PC-3 (cell line): ENCODE measurements at regions of chr6 and their contacts with region 1.

Region 1: GRCh38 chr6:27188885-27189418 is 58.5 kb upstream of the PRSS16 start:
- DNase-seq: peak; percentile 91
- ATAC-seq: peak; percentile 80
- H3K4me3 ChIP-seq: peak overlapping the region; percentile 81
- H3K27ac ChIP-seq: peak overlapping the region; percentile 41
- H3K4me1 ChIP-seq: no peaks in the 10 kb centered on the region
- H3K27me3 ChIP-seq: no peaks in the 10 kb centered on the region
- CTCF ChIP-seq: peak; percentile 81

Region 2: GRCh38 chr6:27157459-27158315 is 31.3 kb before region 1 on chr6:
- CTCF ChIA-PET with region 1: no interaction called
- POLR2A ChIA-PET with region 1: no interaction called
- intact Hi-C with region 1: loop called (anchors 2 kb)
- DNase-seq: peak; percentile 87
- ATAC-seq: peak; percentile 75
- H3K4me3 ChIP-seq: peak overlapping the region; percentile 81
- H3K27ac ChIP-seq: no peak overlapping the region
- H3K4me1 ChIP-seq: peaks cover 10% of the 10 kb centered on the region
- H3K27me3 ChIP-seq: no peaks in the 10 kb centered on the region
- CTCF ChIP-seq: peak; percentile 47; the same call in 1 of the 2 replicates

Region 3: DNA sequence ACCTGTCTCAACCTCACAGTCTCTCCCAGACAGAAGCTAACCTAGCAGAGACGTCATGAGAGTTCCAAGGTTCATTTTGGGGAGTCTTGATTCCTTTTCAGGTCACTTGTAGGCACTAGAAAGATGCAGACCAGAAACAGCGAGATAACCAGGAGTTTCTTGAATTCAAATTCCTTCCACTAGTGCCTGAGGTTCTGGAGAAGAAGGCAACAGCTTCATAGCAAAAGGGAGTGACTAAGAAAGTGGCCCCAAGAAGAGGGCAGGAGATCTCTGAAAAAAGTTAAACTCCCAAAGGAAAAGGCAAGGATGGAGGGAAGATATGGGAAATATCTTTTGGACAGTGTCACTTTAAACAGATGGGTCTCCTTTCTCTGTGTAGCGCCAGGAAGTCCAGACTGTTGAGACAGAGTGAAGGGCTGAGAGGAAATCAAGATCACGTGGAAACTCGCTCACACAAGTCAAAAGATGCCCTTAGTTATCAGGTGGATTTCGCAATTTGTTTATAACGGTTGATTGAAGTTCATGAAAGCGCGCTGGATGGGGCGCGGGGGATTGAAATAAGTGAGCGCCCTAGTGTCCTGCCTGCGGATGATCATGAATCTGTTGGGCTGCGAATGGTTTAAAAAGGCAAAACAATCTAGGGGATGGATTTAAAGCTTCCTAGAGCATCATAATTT is 53.8 kb after region 1 on chr6:
- CTCF ChIA-PET with region 1: no interaction called
- POLR2A ChIA-PET with region 1: no interaction called
- intact Hi-C with region 1: no loop called
- DNase-seq: no peak
- ATAC-seq: no peak
- H3K4me3 ChIP-seq: no peak overlapping the region
- H3K27ac ChIP-seq: no peak overlapping the region
- H3K4me1 ChIP-seq: peaks cover 6% of the 10 kb centered on the region; the same call in 1 of the 2 replicates
- H3K27me3 ChIP-seq: peaks cover 7% of the 10 kb centered on the region; the same call in 1 of the 2 replicates
- CTCF ChIP-seq: no peak

Region 4: DNA sequence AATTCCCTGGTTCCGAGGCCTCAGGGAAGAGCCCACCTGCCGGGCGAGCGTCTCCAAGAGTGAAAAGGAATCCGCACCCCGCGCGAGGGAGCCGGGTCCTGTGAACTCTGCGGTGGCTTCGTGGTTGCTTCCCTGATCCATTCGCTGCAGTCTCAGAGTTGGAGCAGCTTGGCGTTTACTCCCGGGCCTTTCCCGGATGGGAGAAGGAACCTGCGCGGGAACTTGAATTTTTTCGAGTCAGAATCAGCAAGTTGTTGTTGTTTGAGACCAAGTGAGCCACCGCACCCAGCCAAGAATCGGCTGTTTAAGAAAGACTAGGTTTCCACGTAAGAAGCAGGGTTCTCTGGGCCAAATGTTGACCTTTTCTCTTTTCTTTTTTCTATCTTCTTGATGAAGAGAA is 71.4 kb after region 1 on chr6:
- CTCF ChIA-PET with region 1: no interaction called
- POLR2A ChIA-PET with region 1: no interaction called
- intact Hi-C with region 1: no loop called
- DNase-seq: no peak
- ATAC-seq: no peak
- H3K4me3 ChIP-seq: no peak overlapping the region
- H3K27ac ChIP-seq: no peak overlapping the region
- H3K4me1 ChIP-seq: no peaks in the 10 kb centered on the region
- H3K27me3 ChIP-seq: no peaks in the 10 kb centered on the region
- CTCF ChIP-seq: no peak

Region 5: DNA sequence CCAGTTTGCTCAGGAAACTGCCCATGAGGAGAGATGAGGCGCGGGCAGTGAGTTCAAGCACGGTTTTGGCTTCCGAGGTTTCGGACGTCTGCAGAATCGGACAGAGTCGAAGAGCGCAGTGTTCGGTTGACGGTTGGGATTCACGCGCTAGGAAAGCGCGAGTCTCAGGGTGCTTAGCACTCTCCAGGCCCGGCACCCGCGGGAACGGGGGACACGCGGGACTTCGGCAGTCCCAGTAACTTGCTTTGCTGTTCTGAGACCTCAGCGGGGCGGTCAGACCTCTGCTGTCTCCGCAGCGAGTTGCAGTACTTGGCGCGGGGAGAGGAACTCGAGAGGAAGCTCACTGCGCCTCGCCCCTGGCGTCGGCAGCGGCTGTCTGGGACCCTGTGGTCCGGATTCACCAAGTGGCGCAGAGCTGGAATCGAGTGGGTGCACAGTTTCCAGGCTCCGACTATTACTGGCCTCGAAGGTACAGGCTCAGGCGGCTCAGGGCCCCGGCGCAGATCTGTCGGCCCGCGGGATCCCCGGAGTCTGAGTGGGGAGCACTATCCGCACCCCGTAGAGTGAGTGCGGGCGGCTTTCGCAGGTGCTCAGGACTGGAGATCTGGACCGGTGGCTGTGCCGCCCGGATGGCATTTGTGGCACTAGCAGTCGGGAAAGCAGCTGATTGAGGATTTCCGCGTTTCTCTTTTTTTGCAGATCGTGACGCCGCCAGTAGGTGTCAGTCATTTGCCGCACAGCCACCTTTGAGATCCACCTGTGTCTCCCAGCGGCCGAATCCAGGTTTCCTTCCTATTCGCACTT is 123.4 kb after region 1 on chr6 and contains the start of gene POM121L2:
- CTCF ChIA-PET with region 1: interaction called, 3 read pairs
- POLR2A ChIA-PET with region 1: no interaction called
- intact Hi-C with region 1: loop called (anchors 1 kb)
- DNase-seq: peak; percentile 92
- ATAC-seq: peak; percentile 82
- H3K4me3 ChIP-seq: peak within 1 kb of the TSS; percentile 89
- H3K27ac ChIP-seq: no peak within 1 kb of the TSS
- H3K4me1 ChIP-seq: no peaks in the 10 kb centered on the region
- H3K27me3 ChIP-seq: no peaks in the 10 kb centered on the region
- CTCF ChIP-seq: peak; percentile 81
- total RNA-seq, gene POM121L2: not detected in 2 replicates

Region 6: GRCh38 chr6:27472617-27473400 is 283.9 kb after region 1 on chr6 and contains the start of gene ZNF184:
- CTCF ChIA-PET with region 1: no interaction called
- POLR2A ChIA-PET with region 1: no interaction called
- intact Hi-C with region 1: loop called (anchors 5 kb)
- DNase-seq: peak; percentile 98
- ATAC-seq: peak; percentile 88
- H3K4me3 ChIP-seq: peak within 1 kb of the TSS; percentile 93
- H3K27ac ChIP-seq: peak within 1 kb of the TSS; percentile 86
- H3K4me1 ChIP-seq: peaks cover 26% of the 10 kb centered on the region
- H3K27me3 ChIP-seq: no peaks in the 10 kb centered on the region
- CTCF ChIP-seq: no peak
- total RNA-seq, gene ZNF184: 7.0 and 10.2 TPM in 2 replicates

Region 7: GRCh38 chr6:27518881-27519795 is 330.2 kb after region 1 on chr6:
- CTCF ChIA-PET with region 1: no interaction called
- POLR2A ChIA-PET with region 1: no interaction called
- intact Hi-C with region 1: loop called (anchors 1 kb)
- DNase-seq: peak; percentile 96
- ATAC-seq: peak; percentile 73
- H3K4me3 ChIP-seq: peak overlapping the region; percentile 89
- H3K27ac ChIP-seq: peak overlapping the region; percentile 31; the same call in 1 of the 2 replicates
- H3K4me1 ChIP-seq: peaks cover 5% of the 10 kb centered on the region; the same call in 1 of the 2 replicates
- H3K27me3 ChIP-seq: no peaks in the 10 kb centered on the region
- CTCF ChIP-seq: peak; percentile 88

Region 8: GRCh38 chr6:27672113-27672799 is 483.3 kb after region 1 on chr6:
- CTCF ChIA-PET with region 1: no interaction called
- POLR2A ChIA-PET with region 1: no interaction called
- intact Hi-C with region 1: loop called (anchors 5 kb)
- DNase-seq: peak; percentile 90
- ATAC-seq: peak; percentile 64
- H3K4me3 ChIP-seq: peak overlapping the region; percentile 71
- H3K27ac ChIP-seq: peak overlapping the region; percentile 22
- H3K4me1 ChIP-seq: peaks cover 15% of the 10 kb centered on the region
- H3K27me3 ChIP-seq: no peaks in the 10 kb centered on the region
- CTCF ChIP-seq: no peak

Region 9: GRCh38 chr6:27753668-27754407 is 564.9 kb after region 1 on chr6:
- CTCF ChIA-PET with region 1: no interaction called
- POLR2A ChIA-PET with region 1: no interaction called
- intact Hi-C with region 1: loop called (anchors 2 kb)
- DNase-seq: peak; percentile 92
- ATAC-seq: peak; percentile 70
- H3K4me3 ChIP-seq: peak overlapping the region; percentile 82
- H3K27ac ChIP-seq: no peak overlapping the region
- H3K4me1 ChIP-seq: peaks cover 15% of the 10 kb centered on the region
- H3K27me3 ChIP-seq: no peaks in the 10 kb centered on the region
- CTCF ChIP-seq: 0 out of 2 replicates have a peak, but pooled peaks have one; percentile 11